Uterus (tissue), 4 donors: ENCODE measurements at regions of chr12 and their contacts with region 1.

Region 1: DNA sequence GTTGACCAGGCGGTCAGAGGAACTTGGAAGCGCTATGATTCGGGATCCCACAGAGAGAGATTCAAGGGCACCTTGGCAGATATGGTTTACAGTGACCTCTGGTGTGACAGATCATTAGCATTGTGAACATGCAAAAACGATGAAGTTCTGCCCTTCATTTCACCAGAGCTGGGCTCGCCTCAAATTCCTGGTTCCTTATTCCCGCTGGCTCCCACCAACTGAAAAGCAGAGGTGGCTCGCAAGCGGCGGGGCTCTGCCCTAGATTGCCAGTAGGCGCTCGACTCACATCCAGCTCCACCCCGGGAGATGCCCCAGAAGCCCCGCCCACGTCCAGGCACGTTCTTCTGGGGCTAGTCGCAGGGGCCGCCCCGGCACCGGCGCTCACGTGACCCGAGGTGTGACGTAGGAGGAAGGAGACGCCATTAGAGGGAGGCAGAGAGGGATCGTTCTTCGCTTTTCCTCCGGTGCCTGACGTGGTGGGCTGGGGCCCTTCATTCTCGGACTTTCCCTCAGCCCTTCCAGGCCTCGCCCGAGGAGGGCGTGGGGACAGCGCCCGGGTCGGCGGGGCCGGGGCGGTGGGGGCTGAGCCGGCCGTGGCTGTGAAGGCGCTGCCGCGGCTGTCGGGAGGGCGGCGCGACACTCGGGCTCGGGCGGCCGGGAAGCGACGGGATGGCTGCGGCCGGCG is at the start of gene RAB21:
- DNase-seq: peak; percentile 96 to 98
- H3K4me3 ChIP-seq: peak within 1 kb of the TSS; percentile 63 to 82
- H3K27ac ChIP-seq: peak within 1 kb of the TSS; percentile 95 to 97
- H3K4me1 ChIP-seq: no peaks in the 10 kb centered on the region
- H3K27me3 ChIP-seq: no peaks in the 10 kb centered on the region
- CTCF ChIP-seq: peak; percentile 23 to 53 (median 32)
- POLR2A ChIP-seq: peak; percentile 91 to 96
- total RNA-seq, gene RAB21: 10.6 to 72.7 (median 24.5) TPM

Region 2: DNA sequence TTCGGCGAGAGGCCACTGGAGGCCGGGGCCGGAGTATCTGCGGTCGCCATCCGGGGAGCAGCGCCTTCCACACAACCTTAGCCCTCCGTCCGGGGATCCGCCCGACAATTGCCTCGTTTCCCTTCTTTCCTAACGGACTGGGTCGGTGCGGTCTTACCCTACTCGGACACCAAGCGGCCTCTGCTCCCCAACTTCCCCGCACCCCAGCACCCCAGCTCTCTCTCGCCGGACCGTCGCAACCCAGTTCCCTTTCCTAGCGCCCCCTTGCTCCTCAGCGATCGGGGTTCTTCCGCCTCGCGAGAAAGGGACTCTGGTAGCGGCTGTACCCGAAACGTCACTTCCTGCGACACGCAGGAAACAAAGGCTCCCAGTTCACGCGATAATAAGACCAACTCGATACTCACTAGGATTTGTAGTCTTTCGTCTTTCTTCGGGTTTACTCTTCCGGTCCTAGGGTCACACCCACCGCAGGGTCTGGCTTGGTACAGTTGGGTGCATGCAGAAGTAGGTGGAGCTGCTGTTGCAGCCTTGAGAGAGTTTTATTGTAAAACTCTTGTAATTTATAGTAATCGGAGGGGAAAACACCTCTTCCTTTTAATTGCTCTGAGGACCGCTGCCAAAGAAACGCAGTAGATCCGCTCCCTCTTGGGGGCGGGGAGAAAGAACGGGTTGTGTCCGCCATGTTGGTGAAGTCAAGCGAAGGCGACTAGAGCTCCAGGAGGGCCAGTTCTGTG is 90.9 kb before region 1 on chr12 and contains the start of gene ZFC3H1:
- intact Hi-C with region 1: loop called (anchors 10 kb)
- DNase-seq: peak; percentile 91 to 96
- H3K4me3 ChIP-seq: peak within 1 kb of the TSS; percentile 64 to 88
- H3K27ac ChIP-seq: peak within 1 kb of the TSS; percentile 93 to 96
- H3K4me1 ChIP-seq: peaks cover 0 to 7% of the 10 kb centered on the region in 2 donors
- H3K27me3 ChIP-seq: no peaks in the 10 kb centered on the region
- CTCF ChIP-seq: peak; percentile 15 to 43 (median 36)
- POLR2A ChIP-seq: peak; percentile 89
- total RNA-seq, gene ZFC3H1: 12.6 to 80.7 (median 51.2) TPM

Region 3: DNA sequence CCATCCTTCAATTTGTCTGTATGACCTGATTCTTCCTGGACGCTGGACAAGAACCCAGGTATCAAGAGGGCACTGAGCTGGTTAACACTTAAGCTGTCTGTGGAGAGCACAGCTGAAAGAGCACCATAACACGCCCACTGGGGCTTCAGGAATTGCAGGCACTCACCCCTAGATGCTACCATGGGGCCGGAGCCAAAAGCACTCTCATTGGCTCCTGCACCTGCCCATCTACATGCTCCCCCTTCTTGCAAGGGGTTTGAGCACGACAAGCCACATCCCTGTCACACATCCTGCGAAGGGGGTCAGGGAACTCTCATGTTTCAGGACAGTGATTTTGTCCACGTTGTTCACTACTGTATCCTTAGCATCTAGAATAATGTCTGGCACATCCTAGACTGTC is 49.9 kb after region 1 on chr12:
- intact Hi-C with region 1: no loop called
- DNase-seq: no peak
- H3K4me3 ChIP-seq: no peak overlapping the region
- H3K27ac ChIP-seq: no peak overlapping the region
- H3K4me1 ChIP-seq: no peaks in the 10 kb centered on the region
- H3K27me3 ChIP-seq: no peaks in the 10 kb centered on the region
- CTCF ChIP-seq: no peak
- POLR2A ChIP-seq: no peak